Ascending aorta (tissue), 2 donors: ENCODE measurements at regions of chr6 and their contacts with region 1.

Region 1: GRCh38 chr6:109382576-109383437 is 540 bp upstream of the CD164 start:
- DNase-seq: peak; percentile 81 to 96
- H3K4me3 ChIP-seq: peak overlapping the region; percentile 84 to 95
- H3K27ac ChIP-seq: peak overlapping the region; percentile 99
- H3K4me1 ChIP-seq: peaks cover 0 to 17% of the 10 kb centered on the region in 2 donors
- H3K27me3 ChIP-seq: no peaks in the 10 kb centered on the region
- CTCF ChIP-seq: peak; percentile 47 to 66 (median 57)

Region 2: GRCh38 chr6:108074359-108075144 is 1308.3 kb before region 1 on chr6 and contains the start of gene OSTM1:
- intact Hi-C with region 1: loop called (anchors 5 kb)
- DNase-seq: peak; percentile 32 to 95
- H3K4me3 ChIP-seq: peak within 1 kb of the TSS; percentile 87 to 89
- H3K27ac ChIP-seq: peak within 1 kb of the TSS; percentile 74 to 78
- H3K4me1 ChIP-seq: peaks cover 3 to 10% of the 10 kb centered on the region in 2 donors
- H3K27me3 ChIP-seq: no peaks in the 10 kb centered on the region
- CTCF ChIP-seq: no peak
- total RNA-seq, gene OSTM1: 78.7 TPM

Region 3: DNA sequence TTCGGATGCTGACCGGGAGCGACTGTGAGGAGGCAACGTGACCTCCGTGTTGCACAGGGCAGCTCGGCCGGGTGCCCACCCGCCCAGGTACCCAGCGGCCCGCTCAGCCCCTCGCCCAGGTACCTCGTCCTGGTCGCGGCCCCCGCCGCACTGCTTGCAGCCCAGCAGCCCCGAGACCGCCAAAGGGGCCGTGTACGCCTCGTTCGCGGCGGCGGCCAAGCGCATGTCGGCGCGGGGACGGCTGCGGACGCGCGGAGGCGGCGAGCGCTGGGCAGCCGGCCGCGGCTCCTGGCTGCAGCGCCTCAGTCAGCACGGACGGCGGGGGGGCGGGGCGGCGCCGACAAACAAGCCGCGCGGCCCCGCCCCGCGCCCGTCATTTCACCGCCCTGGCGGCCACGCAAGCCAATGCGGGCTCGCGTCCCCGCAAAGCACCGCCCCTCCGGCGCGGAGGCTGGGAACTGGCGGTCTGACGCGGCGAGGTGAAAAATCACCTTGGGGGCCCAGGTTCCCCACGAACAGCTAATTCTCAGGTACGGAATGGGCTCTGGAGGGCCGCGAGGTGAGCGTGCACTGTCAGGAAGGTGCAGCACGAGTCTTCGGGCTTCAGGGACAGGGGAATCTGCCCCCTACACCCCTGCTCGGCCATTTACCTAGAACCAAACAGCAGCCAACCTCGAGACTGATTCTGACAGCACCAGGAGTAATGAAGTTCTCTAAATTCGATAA is 373.4 kb before region 1 on chr6:
- intact Hi-C with region 1: loop called (anchors 2 kb)
- DNase-seq: peak; percentile 62 to 96
- H3K4me3 ChIP-seq: peak overlapping the region; percentile 69 to 99
- H3K27ac ChIP-seq: peak overlapping the region; percentile 77 to 94
- H3K4me1 ChIP-seq: peaks cover 0 to 11% of the 10 kb centered on the region in 2 donors
- H3K27me3 ChIP-seq: no peaks in the 10 kb centered on the region
- CTCF ChIP-seq: peak in 2 of 3 experiments; percentile 5 to 54

Region 4: GRCh38 chr6:109130065-109130464 is 252.7 kb before region 1 on chr6:
- intact Hi-C with region 1: no loop called
- DNase-seq: no peak
- H3K4me3 ChIP-seq: no peak overlapping the region
- H3K27ac ChIP-seq: no peak overlapping the region
- H3K4me1 ChIP-seq: no peaks in the 10 kb centered on the region
- H3K27me3 ChIP-seq: no peaks in the 10 kb centered on the region
- CTCF ChIP-seq: no peak

Region 5: DNA sequence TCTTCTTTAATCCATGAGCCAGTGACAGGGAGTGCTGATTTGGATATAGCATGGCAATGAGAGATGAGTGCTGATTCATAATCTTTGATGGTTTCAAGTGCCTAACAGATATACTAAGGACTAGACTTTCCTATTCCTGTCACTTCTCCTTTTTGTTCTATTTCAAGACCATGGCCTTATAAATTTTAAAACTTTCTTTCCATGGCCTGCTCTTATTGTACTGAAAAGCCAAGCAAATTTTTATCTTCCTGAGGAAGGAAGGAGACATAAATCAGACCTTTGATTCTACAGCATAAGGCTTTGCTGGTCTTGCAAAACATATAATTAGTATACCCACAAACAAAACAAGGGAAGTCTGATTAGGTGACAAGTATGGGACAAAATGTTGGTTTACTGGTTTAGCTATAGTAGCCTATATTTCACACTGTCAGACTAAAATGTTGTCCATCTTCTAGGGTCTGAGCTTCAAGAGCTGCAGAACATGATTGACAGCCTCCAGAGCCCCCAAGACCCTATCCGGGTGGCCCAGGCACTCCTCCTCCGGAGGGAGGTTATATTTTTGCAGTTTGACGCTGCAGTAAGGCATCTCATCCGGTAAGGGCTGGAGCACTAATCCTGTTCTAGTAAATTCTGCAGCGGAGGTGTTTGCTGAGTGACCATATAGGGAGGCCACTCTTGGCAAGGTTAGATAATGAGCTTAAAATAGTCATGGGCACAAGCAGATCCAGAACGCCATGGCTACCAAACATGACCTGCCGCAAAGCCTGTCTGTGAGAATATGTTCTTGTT is 82.8 kb before region 1 on chr6:
- intact Hi-C with region 1: loop called (anchors 2 kb)
- DNase-seq: peak; percentile 28 to 88
- H3K4me3 ChIP-seq: no peak overlapping the region
- H3K27ac ChIP-seq: peak overlapping the region; percentile 79 to 80
- H3K4me1 ChIP-seq: peaks cover 8 to 61% of the 10 kb centered on the region in 2 donors
- H3K27me3 ChIP-seq: no peaks in the 10 kb centered on the region
- CTCF ChIP-seq: no peak

Region 6: GRCh38 chr6:109455502-109456282 is 72.9 kb after region 1 on chr6 and contains the start of gene MICAL1:
- intact Hi-C with region 1: loop called (anchors 5 kb)
- DNase-seq: peak in 1 of 2 donors; percentile 88
- H3K4me3 ChIP-seq: peak within 1 kb of the TSS; percentile 79 to 82
- H3K27ac ChIP-seq: peak within 1 kb of the TSS; percentile 84 to 88
- H3K4me1 ChIP-seq: peaks cover 14 to 20% of the 10 kb centered on the region in 2 donors
- H3K27me3 ChIP-seq: no peaks in the 10 kb centered on the region
- CTCF ChIP-seq: peak; percentile 22 to 45 (median 31)
- total RNA-seq, gene MICAL1: 55.6 TPM

Region 7: DNA sequence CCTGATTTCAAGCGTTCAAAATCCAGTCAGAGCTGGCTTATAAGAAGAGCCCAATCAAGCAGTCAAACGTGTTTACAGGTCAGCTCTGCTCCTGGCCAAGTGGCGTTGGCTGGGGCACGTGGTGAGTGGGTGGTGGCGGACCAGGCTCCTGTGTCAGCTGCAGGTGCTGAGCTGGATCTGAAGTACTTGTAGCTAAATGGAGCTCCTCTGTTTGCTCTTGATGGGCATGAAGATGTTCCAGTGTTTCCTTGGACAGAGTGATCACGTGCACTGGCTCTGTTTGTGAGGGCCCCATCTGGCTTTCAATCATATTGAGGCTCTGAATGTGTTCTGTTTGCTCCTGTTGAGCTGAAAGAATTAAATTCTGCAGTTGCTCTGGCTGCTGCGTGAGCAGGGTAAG is 83.0 kb after region 1 on chr6:
- intact Hi-C with region 1: no loop called
- DNase-seq: peak in 1 of 2 donors; percentile 51
- H3K4me3 ChIP-seq: no peak overlapping the region
- H3K27ac ChIP-seq: no peak overlapping the region
- H3K4me1 ChIP-seq: no peaks in the 10 kb centered on the region
- H3K27me3 ChIP-seq: no peaks in the 10 kb centered on the region
- CTCF ChIP-seq: no peak